A549 (cell line): ENCODE measurements at regions of chr12 and their contacts with region 1.

Region 1: GRCh38 chr12:52249051-52249461 is 16.0 kb downstream of the KRT7 start:
- DNase-seq: peak in 1 of 2 experiments; percentile 71
- ATAC-seq: peak; percentile 0; a peak in 2 of 6 replicates
- H3K4me3 ChIP-seq: no peak overlapping the region
- H3K27ac ChIP-seq: peak overlapping the region; percentile 92 to 97
- H3K4me1 ChIP-seq: peaks cover 96% of the 10 kb centered on the region
- CTCF ChIP-seq: no peak
- EP300 ChIP-seq: no peak
- POLR2A ChIP-seq: no peak; the same call in 1 of the 2 replicates
- RAD21 ChIP-seq: 0 out of 5 replicates have a peak, but pooled peaks of 1 of the 2 experiments have one; percentile 2

Region 2: DNA sequence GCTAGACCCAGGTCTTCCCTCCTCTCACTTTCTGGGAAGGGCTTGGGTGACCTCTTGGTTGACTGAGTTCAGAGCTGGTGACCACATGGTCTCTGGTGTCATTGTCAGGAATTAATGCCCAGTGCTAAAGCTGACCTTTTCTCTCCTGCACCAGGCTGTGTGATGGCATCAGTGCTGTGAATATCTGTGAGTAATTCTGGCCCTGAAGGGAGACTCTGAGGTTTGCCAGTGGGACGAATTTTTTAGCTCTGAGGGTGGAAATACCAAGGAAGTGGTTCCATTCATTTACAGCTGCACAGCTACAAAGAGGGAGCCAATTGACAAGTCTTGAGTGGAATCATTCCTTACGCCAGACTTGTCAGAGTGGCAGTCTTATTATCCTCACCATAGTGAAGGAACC is 19.2 kb after region 1 on chr12:
- CTCF ChIA-PET with region 1: interaction called, 12 read pairs
- POLR2A ChIA-PET with region 1: interaction called, 3 read pairs
- DNase-seq: no peak
- ATAC-seq: no peak
- H3K4me3 ChIP-seq: no peak overlapping the region
- H3K27ac ChIP-seq: peak overlapping the region; percentile 7 to 65; a peak in 3 of 6 replicates
- H3K4me1 ChIP-seq: peaks cover 13% of the 10 kb centered on the region
- CTCF ChIP-seq: no peak
- EP300 ChIP-seq: no peak
- POLR2A ChIP-seq: no peak
- RAD21 ChIP-seq: no peak

Region 3: GRCh38 chr12:52307836-52308805 is 59.1 kb after region 1 on chr12:
- CTCF ChIA-PET with region 1: interaction called, 13 read pairs
- POLR2A ChIA-PET with region 1: interaction called, 3 read pairs
- DNase-seq: peak in 1 of 2 experiments; percentile 49
- ATAC-seq: peak; percentile 55 to 77
- H3K4me3 ChIP-seq: no peak overlapping the region
- H3K27ac ChIP-seq: peak overlapping the region; percentile 60 to 87
- H3K4me1 ChIP-seq: peaks cover 6% of the 10 kb centered on the region; the same call in 1 of the 3 replicates
- CTCF ChIP-seq: no peak
- EP300 ChIP-seq: no peak
- POLR2A ChIP-seq: no peak
- RAD21 ChIP-seq: no peak

Region 4: GRCh38 chr12:52319097-52319496 is 70.0 kb after region 1 on chr12:
- CTCF ChIA-PET with region 1: interaction called, 11 read pairs
- POLR2A ChIA-PET with region 1: interaction called, 4 read pairs
- DNase-seq: peak in 1 of 2 experiments; percentile 59
- ATAC-seq: peak in 1 of 2 experiments; percentile 51; a peak in 2 of 6 replicates
- H3K4me3 ChIP-seq: no peak overlapping the region
- H3K27ac ChIP-seq: peak overlapping the region; percentile 51 to 81
- H3K4me1 ChIP-seq: peaks cover 7% of the 10 kb centered on the region; the same call in 1 of the 3 replicates
- CTCF ChIP-seq: peak; percentile 29
- EP300 ChIP-seq: no peak
- POLR2A ChIP-seq: no peak
- RAD21 ChIP-seq: peak; percentile 52 to 57; a peak in 4 of 5 replicates